GM10248 (cell line): ENCODE measurements at regions of chr4 and their contacts with region 1.

Region 1: GRCh38 chr4:108570993-108571569 is 49.3 kb upstream of the RPL34 start:
- DNase-seq: no peak
- CTCF ChIP-seq: no peak

Region 2: DNA sequence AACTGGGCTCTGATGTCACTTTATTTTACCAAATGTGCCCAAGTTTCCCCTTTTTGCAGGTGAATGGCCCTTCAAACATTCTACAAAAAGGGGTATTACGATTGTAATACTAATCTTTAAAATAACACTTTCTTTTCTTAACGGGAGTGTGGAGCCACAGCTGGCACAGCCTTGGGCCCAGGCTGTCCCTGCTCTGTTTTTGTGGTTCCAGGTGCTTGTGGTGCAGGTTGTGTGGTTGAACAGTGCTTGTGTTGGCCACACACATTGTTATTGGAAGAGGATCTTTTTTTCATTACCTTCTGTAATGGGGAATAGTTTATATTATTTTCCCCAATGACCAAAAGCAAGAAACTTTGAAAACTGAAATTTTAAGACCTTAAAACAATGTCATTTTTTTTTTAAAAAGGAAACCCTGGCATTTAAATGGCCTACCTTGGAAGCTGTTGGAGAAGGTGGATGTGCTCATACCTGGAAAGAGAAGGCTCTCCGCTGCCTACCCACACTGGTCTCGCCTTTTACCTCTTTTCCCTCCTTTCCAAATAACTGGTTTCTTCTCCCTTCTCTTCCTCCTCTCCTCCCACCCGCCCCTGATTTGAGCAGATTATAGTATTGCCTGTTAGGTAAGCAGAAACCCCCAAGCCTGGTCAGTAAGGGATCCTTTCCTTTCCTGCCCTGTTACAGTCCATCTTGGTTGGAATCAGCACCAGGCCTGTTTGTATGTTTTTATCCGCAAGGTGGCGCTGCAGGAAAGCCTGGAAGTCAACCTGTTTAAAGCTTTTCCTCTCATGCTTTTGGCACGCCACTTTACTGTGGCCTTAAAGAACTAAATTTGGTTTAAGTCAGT is 552.8 kb before region 1 on chr4:
- CTCF ChIA-PET with region 1: interaction called, 188 read pairs
- POLR2A ChIA-PET with region 1: no interaction called
- DNase-seq: peak; percentile 74
- CTCF ChIP-seq: peak; percentile 88

Region 3: GRCh38 chr4:108036213-108036612 is 534.9 kb before region 1 on chr4:
- CTCF ChIA-PET with region 1: interaction called, 113 read pairs
- POLR2A ChIA-PET with region 1: no interaction called
- DNase-seq: peak; percentile 76
- CTCF ChIP-seq: no peak

Region 4: DNA sequence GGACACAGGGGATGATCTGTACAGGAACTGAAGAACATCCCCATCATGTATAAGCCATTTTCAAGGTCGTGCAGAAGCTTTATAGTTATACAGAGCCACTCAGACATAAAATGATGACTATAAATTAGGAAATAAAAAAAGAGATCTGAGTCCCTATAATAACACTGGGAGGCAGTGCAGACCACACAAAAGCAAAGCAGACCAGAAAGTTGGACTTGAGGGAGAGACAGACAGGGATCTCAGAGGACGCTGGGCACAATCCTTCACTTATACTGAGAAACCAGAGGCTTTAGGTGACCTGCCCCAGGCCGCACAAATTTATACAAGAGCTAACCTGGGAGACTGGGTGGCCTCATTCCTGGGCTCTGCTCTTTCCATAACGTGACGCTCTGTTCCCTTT is 510.9 kb before region 1 on chr4:
- CTCF ChIA-PET with region 1: interaction called, 20 read pairs
- POLR2A ChIA-PET with region 1: no interaction called
- DNase-seq: no peak
- CTCF ChIP-seq: peak; percentile 42

Region 5: DNA sequence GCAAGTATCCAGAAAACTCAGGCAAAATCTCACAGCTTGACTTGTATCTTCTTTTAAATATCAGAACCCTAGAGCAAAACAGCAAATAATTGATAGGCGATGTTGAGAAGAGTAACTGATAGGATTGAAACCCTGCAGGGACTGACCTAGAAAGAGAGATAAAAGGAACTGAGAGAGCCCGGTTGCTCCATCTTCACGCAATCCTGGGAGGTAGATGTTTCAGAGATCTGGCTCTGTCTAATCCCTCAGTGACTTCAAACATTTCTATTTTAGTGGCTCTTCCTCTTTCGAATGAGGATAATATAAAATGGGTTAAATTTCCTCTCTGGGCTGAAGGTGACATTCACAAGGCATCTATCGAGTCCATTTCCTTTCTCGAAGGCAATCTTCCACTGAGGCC is 10.0 kb after region 1 on chr4:
- CTCF ChIA-PET with region 1: interaction called, 30 read pairs
- POLR2A ChIA-PET with region 1: no interaction called
- DNase-seq: no peak
- CTCF ChIP-seq: no peak